Calu3 (cell line): ENCODE measurements at regions of chr16 and their contacts with region 1.

Region 1: GRCh38 chr16:25366078-25366477 is 108.4 kb upstream of the ZKSCAN2 start:
- DNase-seq: no peak
- H3K4me3 Mint-ChIP-seq: no peak overlapping the region
- H3K27ac Mint-ChIP-seq: no peak overlapping the region
- H3K4me1 Mint-ChIP-seq: peaks cover 9% of the 10 kb centered on the region
- H3K27me3 Mint-ChIP-seq: peaks cover 22% of the 10 kb centered on the region
- CTCF ChIP-seq: no peak

Region 2: GRCh38 chr16:25299792-25300590 is 66.1 kb before region 1 on chr16:
- CTCF ChIA-PET with region 1: no interaction called
- intact Hi-C with region 1: loop called (anchors 10 kb)
- DNase-seq: no peak
- H3K4me3 Mint-ChIP-seq: no peak overlapping the region
- H3K27ac Mint-ChIP-seq: no peak overlapping the region
- H3K4me1 Mint-ChIP-seq: no peaks in the 10 kb centered on the region
- H3K27me3 Mint-ChIP-seq: no peaks in the 10 kb centered on the region
- CTCF ChIP-seq: no peak

Region 3: GRCh38 chr16:25443994-25444393 is 77.9 kb after region 1 on chr16:
- CTCF ChIA-PET with region 1: no interaction called
- intact Hi-C with region 1: loop called (anchors 10 kb)
- DNase-seq: no peak
- H3K4me3 Mint-ChIP-seq: no peak overlapping the region
- H3K27ac Mint-ChIP-seq: no peak overlapping the region
- H3K4me1 Mint-ChIP-seq: no peaks in the 10 kb centered on the region
- H3K27me3 Mint-ChIP-seq: peaks cover 28% of the 10 kb centered on the region
- CTCF ChIP-seq: no peak